Activated CD8-positive, alpha-beta memory T cell treated with anti-CD3 and anti-CD28 coated beads, Interleukin-2, amount 10 ng/mL, durations not matched to agents 7 days and 5 days (primary cell): ENCODE measurements at regions of chr6 and their contacts with region 1.

Region 1: DNA sequence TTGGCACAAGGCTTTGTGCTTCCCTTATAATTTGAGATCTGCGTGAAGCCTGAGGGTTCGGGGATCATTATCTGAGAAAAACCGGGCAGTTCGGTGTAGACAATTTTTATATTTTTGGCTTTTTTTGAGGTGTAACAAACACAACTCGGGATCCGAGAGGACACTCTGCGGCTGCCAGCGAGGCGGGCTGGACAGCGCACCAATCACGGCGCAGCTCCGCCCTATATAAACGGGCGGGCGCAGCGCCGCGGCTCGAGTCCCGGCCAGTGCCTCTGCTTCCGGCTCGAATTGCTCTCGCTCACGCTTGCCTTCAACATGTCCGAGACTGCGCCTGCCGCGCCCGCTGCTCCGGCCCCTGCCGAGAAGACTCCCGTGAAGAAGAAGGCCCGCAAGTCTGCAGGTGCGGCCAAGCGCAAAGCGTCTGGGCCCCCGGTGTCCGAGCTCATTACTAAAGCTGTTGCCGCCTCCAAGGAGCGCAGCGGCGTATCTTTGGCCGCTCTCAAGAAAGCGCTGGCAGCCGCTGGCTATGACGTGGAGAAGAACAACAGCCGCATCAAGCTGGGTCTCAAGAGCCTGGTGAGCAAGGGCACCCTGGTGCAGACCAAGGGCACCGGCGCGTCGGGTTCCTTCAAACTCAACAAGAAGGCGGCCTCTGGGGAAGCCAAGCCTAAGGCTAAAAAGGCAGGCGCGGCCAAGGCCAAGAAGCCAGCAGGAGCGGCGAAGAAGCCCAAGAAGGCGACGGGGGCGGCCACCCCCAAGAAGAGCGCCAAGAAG is 69.0 kb downstream of the HFE start:
- DNase-seq: peak; percentile 92
- ATAC-seq: peak; percentile 51
- H3K4me3 Mint-ChIP-seq: peak overlapping the region; percentile 87
- H3K27ac Mint-ChIP-seq: peak overlapping the region; percentile 97
- H3K4me1 Mint-ChIP-seq: peaks cover 40% of the 10 kb centered on the region
- H3K27me3 Mint-ChIP-seq: peaks cover 17% of the 10 kb centered on the region

Region 2: DNA sequence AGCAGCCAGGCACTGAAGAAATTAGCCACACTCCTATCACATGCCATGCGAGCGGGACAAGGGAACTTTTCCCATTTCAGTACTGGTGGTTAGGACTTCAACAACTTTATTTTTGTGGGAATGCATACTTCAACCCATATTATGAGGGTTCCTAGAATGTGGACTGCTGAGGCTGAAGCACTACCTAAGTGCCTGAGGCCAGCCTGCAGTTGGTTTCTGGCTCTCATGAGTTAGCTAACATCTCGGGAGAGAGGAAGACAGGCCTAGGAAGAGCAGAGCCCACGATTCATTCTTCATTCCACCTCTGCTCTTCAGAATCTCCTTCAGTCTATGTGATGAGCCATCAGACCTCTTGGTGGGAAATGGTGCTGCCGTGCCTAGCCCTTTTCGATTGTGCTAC is 84.4 kb before region 1 on chr6:
- CTCF ChIA-PET with region 1: no interaction called
- DNase-seq: no peak
- ATAC-seq: no peak
- H3K4me3 Mint-ChIP-seq: no peak overlapping the region
- H3K27ac Mint-ChIP-seq: no peak overlapping the region
- H3K4me1 Mint-ChIP-seq: no peaks in the 10 kb centered on the region
- H3K27me3 Mint-ChIP-seq: peaks cover 16% of the 10 kb centered on the region

Region 3: DNA sequence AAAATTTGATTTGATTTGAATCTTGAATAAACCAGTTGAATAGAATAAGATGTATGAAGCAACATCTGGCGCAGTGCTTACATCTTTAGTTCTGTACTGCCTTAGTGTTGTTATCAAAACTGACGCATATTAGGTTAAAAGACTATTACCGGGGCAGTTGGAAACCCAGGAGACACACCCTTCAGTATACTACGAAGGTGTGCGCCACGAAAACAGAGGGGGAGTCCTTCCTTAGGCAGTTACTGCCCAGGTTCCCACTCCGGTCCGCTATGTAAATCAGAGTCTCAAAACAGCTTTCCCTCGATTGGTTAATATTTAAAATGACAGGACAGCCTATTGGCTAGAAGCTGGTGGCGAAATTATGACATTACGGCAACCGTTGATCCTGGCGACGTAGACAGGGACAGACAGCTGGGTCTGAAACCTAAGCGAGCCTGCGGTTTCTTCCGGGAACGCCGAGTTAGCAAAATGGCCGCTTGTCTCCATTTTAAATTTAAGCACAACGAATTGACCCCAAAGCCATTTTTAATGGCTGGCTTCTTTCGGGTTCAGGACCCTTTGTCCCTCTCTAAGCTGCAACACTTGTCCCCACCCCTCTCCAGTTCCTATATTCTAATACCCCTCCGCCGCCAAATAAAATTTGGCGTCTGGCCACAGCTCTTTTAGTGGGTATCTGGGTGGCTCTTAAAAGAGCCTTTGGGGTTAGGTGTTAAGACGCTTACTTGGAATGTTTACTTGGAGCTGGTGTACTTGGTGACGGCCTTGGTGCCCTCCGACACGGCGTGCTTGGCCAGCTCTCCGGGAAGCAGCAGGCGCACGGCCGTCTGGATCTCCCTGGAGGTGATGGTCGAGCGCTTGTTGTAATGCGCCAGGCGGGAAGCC is 33.2 kb before region 1 on chr6:
- CTCF ChIA-PET with region 1: interaction called, 101 read pairs
- DNase-seq: peak; percentile 98
- ATAC-seq: peak; percentile 48
- H3K4me3 Mint-ChIP-seq: peak overlapping the region; percentile 99
- H3K27ac Mint-ChIP-seq: peak overlapping the region; percentile 100
- H3K4me1 Mint-ChIP-seq: peaks cover 40% of the 10 kb centered on the region
- H3K27me3 Mint-ChIP-seq: peaks cover 13% of the 10 kb centered on the region

Region 4: GRCh38 chr6:26172496-26172958 is 16.3 kb after region 1 on chr6:
- CTCF ChIA-PET with region 1: interaction called, 31 read pairs
- DNase-seq: peak; percentile 57
- ATAC-seq: peak; percentile 52
- H3K4me3 Mint-ChIP-seq: peak overlapping the region; percentile 87
- H3K27ac Mint-ChIP-seq: peak overlapping the region; percentile 100
- H3K4me1 Mint-ChIP-seq: peaks cover 41% of the 10 kb centered on the region
- H3K27me3 Mint-ChIP-seq: no peaks in the 10 kb centered on the region

Region 5: DNA sequence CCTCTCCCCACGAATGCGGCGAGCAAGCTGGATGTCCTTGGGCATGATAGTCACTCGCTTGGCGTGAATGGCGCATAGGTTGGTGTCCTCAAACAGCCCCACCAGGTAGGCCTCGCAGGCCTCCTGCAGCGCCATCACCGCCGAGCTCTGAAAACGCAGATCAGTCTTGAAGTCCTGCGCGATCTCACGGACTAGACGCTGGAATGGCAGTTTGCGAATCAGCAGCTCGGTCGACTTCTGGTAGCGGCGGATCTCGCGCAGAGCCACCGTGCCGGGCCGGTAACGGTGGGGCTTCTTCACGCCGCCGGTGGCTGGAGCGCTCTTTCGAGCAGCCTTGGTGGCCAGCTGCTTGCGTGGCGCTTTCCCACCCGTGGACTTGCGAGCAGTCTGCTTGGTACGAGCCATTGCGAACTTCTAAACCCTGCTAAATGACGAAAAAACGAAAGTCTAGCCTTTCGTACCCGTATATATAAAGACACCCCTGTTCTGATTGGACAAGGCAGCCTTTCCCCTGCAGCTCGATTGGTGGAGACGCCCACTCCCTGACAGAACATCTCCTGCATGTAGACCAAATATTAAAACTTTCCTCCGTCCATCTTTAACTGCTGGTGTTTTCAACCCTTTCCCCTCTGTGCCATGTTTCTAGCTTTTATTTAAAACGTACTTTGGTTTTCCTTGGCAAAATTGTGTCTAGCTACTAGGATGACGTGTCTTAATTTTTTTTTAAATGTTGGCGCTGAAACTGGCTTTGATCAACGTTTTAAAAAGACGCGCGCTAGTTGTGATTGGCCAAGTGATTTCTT is 40.8 kb after region 1 on chr6:
- CTCF ChIA-PET with region 1: interaction called, 14 read pairs
- DNase-seq: peak; percentile 91
- ATAC-seq: peak; percentile 43
- H3K4me3 Mint-ChIP-seq: peak overlapping the region; percentile 87
- H3K27ac Mint-ChIP-seq: peak overlapping the region; percentile 98
- H3K4me1 Mint-ChIP-seq: peaks cover 42% of the 10 kb centered on the region
- H3K27me3 Mint-ChIP-seq: no peaks in the 10 kb centered on the region